ENCODE measurements at regions of chr19 and their contacts with region 1.

Region 1: DNA sequence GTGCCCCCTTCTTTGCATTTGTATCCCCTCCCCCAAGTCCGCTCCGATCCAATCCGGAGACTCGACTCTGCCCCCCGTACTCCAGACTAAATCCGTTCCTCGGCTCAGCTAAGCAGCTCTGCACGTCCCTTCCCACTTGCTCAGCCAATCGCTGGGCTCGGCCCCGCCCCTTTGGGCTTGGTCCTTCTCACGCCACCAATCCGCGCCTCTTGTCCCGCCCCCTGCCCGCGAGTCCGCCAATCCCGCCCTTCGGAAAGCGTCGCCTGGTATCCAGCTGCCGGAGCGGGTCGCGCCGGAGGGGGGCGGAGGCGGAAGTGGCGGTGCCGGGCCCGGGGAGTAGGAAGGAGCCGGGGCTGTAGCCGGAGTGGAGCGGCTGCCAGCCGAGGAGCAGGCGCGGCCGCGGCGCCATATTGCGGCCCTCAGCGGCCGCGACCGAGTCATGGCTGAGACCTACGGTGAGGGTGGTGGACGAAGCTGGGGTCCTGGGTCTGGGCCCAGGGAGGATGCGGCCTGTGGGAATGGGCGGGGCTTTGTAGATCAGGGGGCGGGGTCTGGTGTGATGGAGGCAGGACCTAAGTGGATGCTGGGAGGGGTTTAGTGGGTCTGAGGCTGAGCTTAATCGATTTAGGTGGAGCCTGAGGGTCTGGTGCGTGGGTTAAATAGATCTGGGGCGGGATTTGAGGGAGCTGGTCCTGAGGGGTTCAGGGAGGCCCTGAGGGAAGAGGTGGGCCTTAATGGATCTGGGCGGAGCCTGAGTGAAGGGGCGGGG is at the start of gene RAB4B:
- DNase-seq: peak; percentile 100
- H3K4me3 Mint-ChIP-seq: peak within 1 kb of the TSS; percentile 91
- H3K27ac Mint-ChIP-seq: peak within 1 kb of the TSS; percentile 89
- H3K4me1 Mint-ChIP-seq: peaks cover 51% of the 10 kb centered on the region
- H3K27me3 Mint-ChIP-seq: peaks cover 2% of the 10 kb centered on the region
- total RNA-seq, gene RAB4B: 40.6 and 45.5 TPM in 2 replicates

Region 2: DNA sequence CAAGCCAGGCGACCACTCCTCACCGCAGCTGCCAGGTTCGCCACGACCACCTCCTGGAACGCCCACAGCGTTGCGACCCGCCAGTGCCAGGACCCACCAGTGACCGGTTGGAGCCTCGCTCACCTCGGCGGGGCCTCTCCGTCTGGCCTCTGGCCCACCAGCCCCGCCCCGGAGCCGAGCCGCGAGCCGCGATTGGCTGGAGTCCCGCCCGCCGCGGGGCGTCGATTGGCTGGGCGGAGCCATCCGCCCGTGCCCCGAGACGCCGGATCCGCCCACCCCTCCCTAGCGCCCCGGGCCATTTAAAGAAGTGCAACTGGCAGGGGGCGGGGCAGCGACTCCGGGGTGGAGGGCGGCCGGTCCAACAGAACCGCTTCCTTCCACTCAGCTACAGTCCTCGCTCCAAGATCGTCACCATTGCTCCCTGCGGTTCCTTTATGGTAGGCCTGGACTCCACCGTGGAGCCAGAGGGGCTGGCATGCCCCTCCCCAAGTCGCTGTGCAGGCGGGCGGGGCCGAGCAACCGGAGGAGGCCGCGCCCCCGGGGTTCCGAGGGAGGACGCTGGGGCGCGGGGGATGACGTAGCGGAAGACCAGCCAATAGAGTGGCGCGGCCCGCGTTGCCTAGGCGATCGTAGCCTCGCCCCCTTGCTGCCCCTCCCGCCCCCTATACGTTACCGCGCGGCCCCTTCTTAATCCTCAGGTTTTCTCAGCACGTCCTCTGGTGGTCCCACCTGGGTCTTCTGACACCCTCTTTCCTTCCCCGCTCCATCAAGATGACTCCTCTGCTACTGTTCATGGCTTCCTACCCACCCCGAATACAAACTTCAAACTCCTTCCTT is 333.7 kb before region 1 on chr19 and contains the start of gene SERTAD3:
- intact Hi-C with region 1: loop called (anchors 1 kb)
- DNase-seq: peak; percentile 97
- H3K4me3 Mint-ChIP-seq: peak within 1 kb of the TSS; percentile 97
- H3K27ac Mint-ChIP-seq: peak within 1 kb of the TSS; percentile 97
- H3K4me1 Mint-ChIP-seq: peaks cover 26% of the 10 kb centered on the region
- H3K27me3 Mint-ChIP-seq: no peaks in the 10 kb centered on the region
- total RNA-seq, gene SERTAD3: 6.4 and 10.0 TPM in 2 replicates

Region 3: DNA sequence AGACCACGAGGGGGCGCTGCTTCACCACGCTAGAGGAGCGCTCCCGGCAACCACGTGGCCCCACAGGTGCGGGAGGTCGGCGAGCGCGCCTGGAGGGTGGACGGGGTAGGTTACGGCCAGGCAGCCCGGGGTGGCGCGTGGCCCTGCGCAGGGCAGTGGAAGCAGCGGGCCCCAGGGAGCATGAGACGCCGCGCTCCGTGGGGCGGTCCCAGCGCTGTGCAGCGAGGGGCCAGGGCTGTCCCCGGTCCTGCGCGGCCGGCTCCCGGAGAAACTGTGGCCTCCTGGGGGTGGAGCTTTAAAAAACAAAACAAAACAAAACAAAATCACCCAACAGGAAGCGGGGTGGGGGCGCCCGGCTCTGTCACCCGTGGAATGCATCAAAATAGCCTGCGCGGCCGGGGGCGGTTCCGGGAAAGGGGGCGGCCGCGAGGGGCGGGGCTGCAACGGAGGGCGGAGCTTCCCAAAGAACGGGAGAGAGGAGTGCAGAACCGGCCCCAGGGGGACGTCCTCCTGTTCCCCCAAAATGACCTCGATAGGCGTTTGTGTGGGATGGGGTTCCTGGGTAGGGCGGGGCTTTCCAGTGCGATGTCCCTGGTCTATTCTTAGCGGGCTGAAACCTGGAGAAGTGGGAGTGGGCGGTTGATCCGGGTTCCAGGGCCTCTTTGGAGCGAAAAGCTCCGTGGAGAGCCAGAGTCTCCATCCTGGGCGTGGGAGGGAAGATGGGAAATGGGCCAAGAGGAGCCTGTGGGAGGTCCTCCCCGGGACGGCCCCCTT is 115.0 kb before region 1 on chr19:
- intact Hi-C with region 1: loop called (anchors 1 kb)
- DNase-seq: peak; percentile 87
- H3K4me3 Mint-ChIP-seq: peak overlapping the region; percentile 80
- H3K27ac Mint-ChIP-seq: peak overlapping the region; percentile 86
- H3K4me1 Mint-ChIP-seq: peaks cover 20% of the 10 kb centered on the region
- H3K27me3 Mint-ChIP-seq: peaks cover 2% of the 10 kb centered on the region

Region 4: DNA sequence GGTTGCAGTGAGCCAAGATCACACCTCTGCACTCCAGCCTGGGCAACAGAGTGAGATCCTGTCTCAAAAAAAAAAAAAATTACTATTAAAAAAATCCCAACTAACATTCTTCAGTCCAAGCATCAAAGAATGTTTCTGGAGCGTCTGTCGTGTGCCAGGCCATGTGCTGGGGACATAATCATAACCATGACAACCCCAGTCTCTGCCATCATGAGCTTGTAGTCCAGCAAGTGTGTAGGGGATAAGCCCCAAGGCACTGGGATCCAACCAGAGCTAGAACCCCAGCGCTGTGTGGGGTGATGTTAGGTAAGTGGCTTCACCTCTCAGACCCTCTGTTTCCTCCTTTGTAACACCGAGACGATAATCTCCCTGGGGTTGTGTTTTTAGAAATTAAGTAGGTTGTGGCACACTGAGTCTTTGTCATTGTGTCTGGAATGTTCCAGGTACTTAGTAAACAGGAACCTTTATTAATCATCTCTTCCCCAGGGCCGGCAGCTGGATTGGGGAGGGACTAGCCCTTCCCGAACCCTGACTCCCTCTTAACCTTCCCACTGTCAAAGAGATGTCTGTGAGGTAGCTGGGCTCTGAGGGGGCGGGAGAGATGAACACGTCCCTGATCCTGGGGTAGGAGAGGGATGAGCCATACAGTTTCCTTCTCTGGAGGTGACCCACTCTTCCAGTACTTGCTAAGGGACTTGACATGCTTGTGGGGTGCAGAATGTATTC is 56.0 kb before region 1 on chr19:
- intact Hi-C with region 1: no loop called
- DNase-seq: no peak
- H3K4me3 Mint-ChIP-seq: no peak overlapping the region
- H3K27ac Mint-ChIP-seq: no peak overlapping the region
- H3K4me1 Mint-ChIP-seq: peaks cover 24% of the 10 kb centered on the region
- H3K27me3 Mint-ChIP-seq: no peaks in the 10 kb centered on the region

Region 5: GRCh38 chr19:40750059-40750873 is 27.9 kb before region 1 on chr19 and contains the start of gene ACTMAP:
- intact Hi-C with region 1: loop called (anchors 1 kb)
- DNase-seq: peak; percentile 100
- H3K4me3 Mint-ChIP-seq: peak within 1 kb of the TSS; percentile 99
- H3K27ac Mint-ChIP-seq: peak within 1 kb of the TSS; percentile 99
- H3K4me1 Mint-ChIP-seq: peaks cover 27% of the 10 kb centered on the region
- H3K27me3 Mint-ChIP-seq: no peaks in the 10 kb centered on the region
- total RNA-seq, gene ACTMAP: 9.5 and 10.0 TPM in 2 replicates

Region 6: DNA sequence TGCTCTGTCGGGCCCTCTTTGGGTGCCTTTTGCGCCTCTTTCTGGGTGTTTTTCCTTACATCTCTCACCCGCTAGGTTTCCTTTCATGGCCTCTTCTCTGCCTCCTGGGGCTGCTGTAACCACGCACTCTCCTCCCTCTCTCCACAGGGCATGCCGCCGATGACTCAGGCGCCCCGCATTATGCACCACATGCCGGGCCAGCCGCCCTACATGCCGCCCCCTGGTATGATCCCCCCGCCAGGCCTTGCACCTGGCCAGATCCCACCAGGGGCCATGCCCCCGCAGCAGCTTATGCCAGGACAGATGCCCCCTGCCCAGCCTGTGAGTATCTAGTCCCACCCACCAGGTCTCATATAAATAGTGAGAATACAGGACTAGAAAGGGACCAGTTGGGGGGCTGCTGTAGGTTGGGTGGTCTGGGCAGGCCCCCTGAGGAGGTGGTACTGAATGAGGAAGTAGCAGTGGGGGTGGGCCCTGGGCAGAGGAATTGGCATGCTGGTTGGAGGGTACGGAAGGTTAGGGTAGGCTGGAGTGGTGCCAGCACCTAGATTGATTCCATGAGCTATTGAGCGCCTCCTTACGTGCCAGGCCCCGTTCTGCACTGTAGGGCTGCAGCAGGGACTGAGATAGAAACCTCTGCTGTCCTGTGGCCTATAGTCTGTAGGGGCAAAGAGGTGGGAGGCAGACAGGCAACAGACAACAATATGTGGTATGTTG is 15.2 kb before region 1 on chr19:
- intact Hi-C with region 1: no loop called
- DNase-seq: no peak
- H3K4me3 Mint-ChIP-seq: peak overlapping the region; percentile 15
- H3K27ac Mint-ChIP-seq: no peak overlapping the region
- H3K4me1 Mint-ChIP-seq: peaks cover 54% of the 10 kb centered on the region
- H3K27me3 Mint-ChIP-seq: no peaks in the 10 kb centered on the region

Region 7: DNA sequence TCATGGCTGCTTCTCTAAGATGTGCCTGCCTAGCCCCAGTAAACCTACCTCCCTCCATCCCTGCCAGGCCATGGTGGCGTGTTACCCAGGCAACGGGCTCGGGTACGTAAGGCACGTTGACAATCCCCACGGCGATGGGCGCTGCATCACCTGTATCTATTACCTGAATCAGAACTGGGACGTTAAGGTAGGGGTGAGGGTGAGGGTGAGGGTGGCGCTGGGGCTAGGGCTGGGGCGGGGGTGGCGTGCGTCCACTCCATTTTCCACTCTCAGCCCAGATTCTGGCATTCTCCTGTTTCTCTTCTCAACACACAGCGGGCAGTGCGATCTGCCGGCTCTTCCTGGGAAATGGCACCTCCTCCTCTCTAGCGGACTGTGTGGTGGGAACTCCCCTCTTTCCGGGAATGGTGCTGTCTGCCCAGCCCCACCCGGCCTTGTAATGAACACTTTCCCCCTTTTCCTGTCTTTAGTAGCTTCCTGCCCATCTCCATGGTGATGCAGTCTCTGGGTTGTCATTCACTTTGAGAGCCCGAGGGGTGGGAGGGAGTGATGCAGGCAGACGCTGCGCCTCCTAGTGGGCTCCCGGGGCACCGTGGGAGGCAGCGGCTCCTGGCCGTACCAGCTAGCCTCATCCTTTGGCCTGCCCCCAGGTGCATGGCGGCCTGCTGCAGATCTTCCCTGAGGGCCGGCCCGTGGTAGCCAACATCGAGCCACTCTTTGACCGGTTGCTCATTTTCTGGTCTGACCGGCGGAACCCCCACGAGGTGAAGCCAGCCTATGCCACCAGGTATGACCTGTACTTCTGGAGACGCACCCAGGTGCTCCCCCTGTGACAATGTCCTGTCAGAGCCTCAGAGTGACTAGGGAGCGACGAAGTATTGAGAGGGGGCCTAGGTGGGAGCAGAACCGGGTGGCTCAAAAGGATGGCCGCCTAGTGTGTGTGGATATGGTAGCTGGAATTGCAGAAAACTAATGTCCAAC is 28.7 kb after region 1 on chr19:
- intact Hi-C with region 1: loop called (anchors 1 kb)
- DNase-seq: peak; percentile 74
- H3K4me3 Mint-ChIP-seq: peak overlapping the region; percentile 97
- H3K27ac Mint-ChIP-seq: peak overlapping the region; percentile 98
- H3K4me1 Mint-ChIP-seq: peaks cover 82% of the 10 kb centered on the region
- H3K27me3 Mint-ChIP-seq: no peaks in the 10 kb centered on the region

Measured in activated T-helper 1 cell treated with anti-CD3 and anti-CD28 coated beads, Interleukin-12 subunit alpha, Interleukin-12 subunit beta, Interleukin-2, Interleukin-4 antibody, amounts not matched to agents 30 ng/mL and 10 ng/mL and 1 ng/mL, durations not matched to agents 14 hours and 24 hours and 36 hours (primary cell).